Esophagus muscularis mucosa (tissue), 4 donors: ENCODE measurements at regions of chr14 and their contacts with region 1.

Region 1: DNA sequence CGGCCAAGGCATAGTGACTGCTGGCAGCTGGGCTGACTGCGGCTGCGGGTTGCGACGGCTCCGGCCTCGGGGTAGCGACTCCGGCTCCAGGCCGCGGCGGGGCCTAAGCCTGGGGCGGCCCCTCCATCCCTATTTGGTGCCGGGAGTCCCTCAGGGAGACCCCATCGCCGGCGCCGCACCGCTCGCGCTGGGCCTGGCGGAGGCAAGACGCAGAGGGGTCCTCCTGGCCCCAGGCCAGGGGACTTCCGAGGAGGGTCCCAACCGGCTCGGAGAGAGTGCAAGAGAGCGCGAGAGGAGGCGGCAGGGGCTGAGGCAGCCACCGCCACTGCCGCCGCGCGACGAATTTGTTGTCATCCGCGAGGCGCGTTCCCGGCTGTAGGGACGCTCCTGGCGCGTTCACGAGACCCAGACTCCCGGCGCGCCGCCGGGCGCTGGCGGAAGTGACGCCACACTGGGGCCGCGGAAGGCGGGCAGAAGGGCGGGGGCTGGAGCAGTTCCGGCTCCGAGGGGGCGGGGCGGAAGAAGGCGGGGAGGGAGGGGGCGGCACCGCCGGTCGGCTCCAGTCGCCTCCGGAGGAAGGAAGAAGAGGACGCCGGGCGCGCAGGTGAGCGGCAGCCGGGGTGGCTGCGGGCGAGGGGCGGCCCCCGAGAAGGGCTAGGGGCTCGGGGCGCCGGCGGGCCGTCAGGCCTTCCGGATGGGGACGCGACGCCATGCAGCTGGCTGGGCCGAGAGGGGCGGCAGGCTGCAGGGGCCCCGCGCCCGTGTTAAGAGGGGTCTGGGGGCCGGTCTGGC is at the starts of genes ATG2B and GSKIP:
- DNase-seq: peak; percentile 97
- H3K4me3 ChIP-seq: peak within 1 kb of the TSS; percentile 89 to 100 (median 94)
- H3K27ac ChIP-seq: peak within 1 kb of the TSS; percentile 96 to 98 (median 98)
- H3K4me1 ChIP-seq: peaks cover 18 to 45% (median 40%) of the 10 kb centered on the region in 4 donors
- H3K27me3 ChIP-seq: no peaks in the 10 kb centered on the region
- CTCF ChIP-seq: no peak
- EP300 ChIP-seq: no peak
- POLR2A ChIP-seq: no peak
- total RNA-seq, gene ATG2B: 18.2 to 26.6 (median 23.1) TPM
- total RNA-seq, gene GSKIP: 10.4 to 22.0 (median 13.1) TPM

Region 2: GRCh38 chr14:96391293-96392118 is 28.3 kb after region 1 on chr14:
- intact Hi-C with region 1: loop called (anchors 2 kb)
- DNase-seq: peak; percentile 99
- H3K4me3 ChIP-seq: peak overlapping the region; percentile 68 to 89 (median 74)
- H3K27ac ChIP-seq: peak overlapping the region; percentile 63 to 81 (median 74)
- H3K4me1 ChIP-seq: peaks cover 14 to 19% (median 16%) of the 10 kb centered on the region in 4 donors
- H3K27me3 ChIP-seq: peaks cover 0 to 3% (median 0%) of the 10 kb centered on the region in 4 donors
- CTCF ChIP-seq: peak in 1 of 3 experiments; percentile 7
- EP300 ChIP-seq: no peak
- POLR2A ChIP-seq: no peak

Region 3: DNA sequence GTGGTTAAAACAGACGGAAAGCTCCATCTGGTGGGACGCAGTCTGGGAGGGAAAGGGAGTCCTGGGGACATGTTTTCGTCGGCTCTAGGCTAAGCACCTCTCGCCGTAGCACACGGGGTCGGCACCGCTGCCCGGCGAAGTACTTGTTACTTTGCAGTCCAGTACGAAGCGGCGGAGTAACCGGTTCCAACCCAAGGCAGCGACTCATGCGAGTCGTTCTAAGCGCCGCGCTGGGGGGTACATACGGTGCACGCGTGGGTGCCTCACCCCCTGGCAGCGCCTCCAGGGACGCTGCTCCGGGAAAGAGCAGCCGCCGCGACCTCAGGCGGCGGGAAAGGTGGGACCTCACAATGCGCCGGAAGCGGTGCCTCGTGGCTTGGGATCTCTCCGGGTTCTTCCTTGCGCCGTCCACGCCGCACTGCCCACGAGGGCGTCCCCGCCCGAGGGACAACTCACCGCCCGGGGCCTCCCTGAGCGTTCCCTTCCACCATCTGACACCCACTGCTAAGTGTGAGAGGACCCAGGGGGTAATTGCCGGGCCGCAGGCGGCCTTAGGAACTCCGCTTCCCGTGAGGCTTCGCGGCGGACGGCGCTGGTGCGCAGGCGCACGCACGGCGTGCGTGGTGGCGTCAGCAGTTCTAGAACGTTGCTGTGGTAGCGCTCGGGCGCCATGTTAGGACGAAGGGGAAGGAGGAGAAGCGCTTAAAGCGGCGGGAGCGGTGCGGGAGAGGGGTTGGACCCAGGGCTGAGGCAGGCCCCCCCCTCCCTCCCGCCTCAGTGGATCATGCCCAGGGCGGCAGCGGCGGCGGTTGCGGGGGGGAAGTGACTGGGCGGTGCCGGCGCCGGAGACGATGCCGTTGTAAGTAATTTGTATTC is 138.8 kb after region 1 on chr14 and contains the start of gene PAPOLA:
- intact Hi-C with region 1: loop called (anchors 10 kb)
- DNase-seq: peak; percentile 98
- H3K4me3 ChIP-seq: peak within 1 kb of the TSS; percentile 81 to 94 (median 88)
- H3K27ac ChIP-seq: peak within 1 kb of the TSS; percentile 95 to 99 (median 97)
- H3K4me1 ChIP-seq: peaks cover 29 to 45% (median 43%) of the 10 kb centered on the region in 4 donors
- H3K27me3 ChIP-seq: no peaks in the 10 kb centered on the region
- CTCF ChIP-seq: peak in 2 of 3 experiments; percentile 9 to 27
- EP300 ChIP-seq: no peak
- POLR2A ChIP-seq: peak; percentile 12
- total RNA-seq, gene PAPOLA: 105 to 155 (median 116) TPM